ENCODE measurements at regions of chr2 and their contacts with region 1.

Region 1: DNA sequence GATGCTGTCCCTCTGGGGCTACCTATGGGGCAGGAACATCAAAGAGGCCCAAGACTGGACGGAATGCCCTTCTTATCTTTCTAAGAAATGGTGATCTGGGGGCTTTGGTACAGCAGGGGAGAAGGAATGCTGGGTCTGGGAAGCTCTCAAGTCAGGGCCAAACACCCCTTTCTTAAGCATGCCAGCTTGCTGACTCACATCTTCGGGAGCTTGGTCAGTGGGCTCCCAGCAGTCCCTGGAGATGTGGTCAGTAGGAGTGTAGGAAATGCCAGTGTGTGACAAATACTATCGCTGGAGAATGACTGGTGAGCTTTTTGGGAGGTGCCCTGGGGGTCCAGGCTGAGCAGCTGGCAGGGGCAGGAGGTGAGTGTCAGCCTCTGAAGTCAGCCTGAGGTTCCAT is 105.0 kb upstream of the CDC42EP3 start:
- DNase-seq: no peak
- H3K4me3 ChIP-seq: no peak overlapping the region
- H3K27ac ChIP-seq: peak overlapping the region; percentile 80 to 88 (median 82)
- H3K4me1 ChIP-seq: peaks cover 0 to 100% (median 98%) of the 10 kb centered on the region in 4 donors
- H3K27me3 ChIP-seq: no peaks in the 10 kb centered on the region
- CTCF ChIP-seq: no peak
- EP300 ChIP-seq: no peak
- POLR2A ChIP-seq: no peak

Region 2: DNA sequence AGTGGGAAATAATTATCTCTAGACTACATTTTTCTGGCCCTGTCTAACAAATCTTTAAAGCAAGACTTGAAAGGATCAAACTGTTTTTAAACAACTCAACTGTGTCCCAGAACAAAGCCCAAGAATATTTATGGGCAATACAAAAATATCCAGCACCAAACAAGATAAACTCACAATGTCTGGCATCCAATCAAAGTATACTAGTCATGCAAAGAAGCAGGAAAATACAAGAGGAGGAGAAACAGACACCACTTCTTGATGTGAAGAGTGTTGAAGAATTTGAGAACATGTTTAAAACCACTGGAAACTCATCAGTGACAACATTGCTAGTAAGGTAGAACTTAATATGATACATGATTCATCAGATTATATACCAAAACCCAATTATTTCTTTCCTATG is 39.0 kb before region 1 on chr2:
- intact Hi-C with region 1: loop called (anchors 5 kb)
- DNase-seq: no peak
- H3K4me3 ChIP-seq: no peak overlapping the region
- H3K27ac ChIP-seq: peak overlapping the region in 3 of 4 donors; percentile 67 to 75 (median 71)
- H3K4me1 ChIP-seq: peaks cover 0 to 68% (median 32%) of the 10 kb centered on the region in 4 donors
- H3K27me3 ChIP-seq: no peaks in the 10 kb centered on the region
- CTCF ChIP-seq: no peak
- EP300 ChIP-seq: no peak
- POLR2A ChIP-seq: no peak

Region 3: DNA sequence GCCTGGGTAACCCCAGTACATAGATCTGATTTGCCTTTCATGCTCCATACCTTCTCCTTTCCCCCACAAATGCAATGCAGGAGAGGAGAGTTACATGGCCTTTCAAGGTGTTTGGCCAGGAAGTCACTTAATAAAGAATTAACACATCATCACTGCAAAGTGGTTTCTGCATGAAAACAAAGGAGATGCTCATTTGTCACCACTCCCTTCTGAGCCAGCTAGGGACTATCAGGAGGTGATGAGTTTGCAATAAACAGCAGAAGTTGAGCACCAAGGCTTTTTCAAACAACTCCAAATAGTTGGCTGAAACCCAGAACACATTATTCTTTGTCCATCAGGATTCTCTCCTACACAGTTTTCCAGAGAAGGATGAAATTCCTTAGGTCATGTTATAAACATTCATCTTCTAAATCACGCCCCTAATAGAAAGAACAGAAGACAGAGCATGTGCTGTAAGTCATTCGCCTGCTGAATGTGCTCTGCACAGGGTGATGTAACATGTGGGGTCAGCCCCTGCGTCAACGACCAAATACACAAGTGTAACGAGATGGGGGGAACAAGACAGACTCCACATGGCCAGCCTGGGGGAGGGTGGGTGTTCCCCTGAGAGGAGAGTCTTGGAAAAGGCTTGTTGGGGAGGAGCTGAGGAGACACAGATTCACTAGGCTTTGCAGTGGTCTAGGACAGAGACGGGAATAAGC is 61.3 kb after region 1 on chr2:
- intact Hi-C with region 1: loop called (anchors 5 kb)
- DNase-seq: peak; percentile 96
- H3K4me3 ChIP-seq: no peak overlapping the region
- H3K27ac ChIP-seq: peak overlapping the region; percentile 59 to 85 (median 72)
- H3K4me1 ChIP-seq: peaks cover 0 to 28% (median 17%) of the 10 kb centered on the region in 4 donors
- H3K27me3 ChIP-seq: no peaks in the 10 kb centered on the region
- CTCF ChIP-seq: no peak
- EP300 ChIP-seq: peak; percentile 92 to 99 (median 96)
- POLR2A ChIP-seq: no peak

Region 4: DNA sequence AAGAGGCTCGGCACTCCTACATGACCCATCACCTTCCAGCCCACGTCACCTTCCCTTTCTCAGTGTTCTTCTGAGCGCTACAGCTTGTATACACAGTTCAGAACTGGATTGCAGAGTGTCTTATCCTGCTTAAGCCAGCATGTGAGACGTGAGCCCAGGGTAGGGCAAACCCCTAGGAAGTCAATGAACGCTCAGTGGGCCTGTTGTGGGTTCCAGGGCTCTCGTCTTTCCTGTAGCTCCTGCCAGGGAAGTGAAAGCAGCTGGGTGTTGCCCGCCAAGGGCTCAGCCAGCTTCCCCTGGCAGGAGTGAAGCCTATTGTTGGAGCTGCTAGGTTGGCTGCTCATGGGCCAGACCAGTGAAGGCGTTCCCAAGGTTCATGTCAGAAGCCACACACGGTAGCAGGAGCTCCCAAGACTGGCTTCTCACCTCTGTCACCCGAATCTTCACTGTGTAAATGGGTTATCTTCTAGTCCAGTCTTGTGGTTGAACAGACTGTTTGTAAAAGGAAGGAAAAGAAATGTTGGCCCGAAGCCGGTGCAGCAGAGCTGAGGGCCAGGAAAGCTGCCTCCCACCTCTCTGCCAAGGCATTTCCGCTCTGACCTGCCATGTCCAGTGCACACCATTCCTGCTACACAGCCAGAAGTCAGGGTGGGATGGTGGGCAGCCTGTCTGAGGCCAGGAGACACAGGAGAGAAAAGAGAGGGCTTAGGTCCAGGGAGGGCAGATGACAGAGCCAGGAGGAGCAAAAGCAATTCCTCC is 79.0 kb after region 1 on chr2:
- intact Hi-C with region 1: loop called (anchors 5 kb)
- DNase-seq: peak; percentile 73
- H3K4me3 ChIP-seq: no peak overlapping the region
- H3K27ac ChIP-seq: peak overlapping the region; percentile 74 to 90 (median 86)
- H3K4me1 ChIP-seq: peaks cover 0 to 71% (median 54%) of the 10 kb centered on the region in 4 donors
- H3K27me3 ChIP-seq: no peaks in the 10 kb centered on the region
- CTCF ChIP-seq: no peak
- EP300 ChIP-seq: no peak
- POLR2A ChIP-seq: no peak

Measured in sigmoid colon (tissue), 7 donors.